ENCODE measurements at regions of chr6 and their contacts with region 1.

Region 1: GRCh38 chr6:157756708-157757429 is 66.2 kb upstream of the SNX9 start:
- DNase-seq: peak; percentile 78 to 87 (median 81)
- H3K4me3 ChIP-seq: no peak overlapping the region
- H3K27ac ChIP-seq: no peak overlapping the region
- H3K4me1 ChIP-seq: peaks cover 2 to 11% (median 10%) of the 10 kb centered on the region in 4 experiments
- H3K27me3 ChIP-seq: peaks cover 0 to 2% (median 0%) of the 10 kb centered on the region in 5 experiments

Region 2: GRCh38 chr6:157726892-157727628 is 29.8 kb before region 1 on chr6:
- CTCF ChIA-PET with region 1: no interaction called
- POLR2A ChIA-PET with region 1: no interaction called
- DNase-seq: no peak
- H3K4me3 ChIP-seq: no peak overlapping the region
- H3K27ac ChIP-seq: no peak overlapping the region
- H3K4me1 ChIP-seq: no peaks in the 10 kb centered on the region
- H3K27me3 ChIP-seq: peaks cover 0 to 2% (median 0%) of the 10 kb centered on the region in 5 experiments

Region 3: DNA sequence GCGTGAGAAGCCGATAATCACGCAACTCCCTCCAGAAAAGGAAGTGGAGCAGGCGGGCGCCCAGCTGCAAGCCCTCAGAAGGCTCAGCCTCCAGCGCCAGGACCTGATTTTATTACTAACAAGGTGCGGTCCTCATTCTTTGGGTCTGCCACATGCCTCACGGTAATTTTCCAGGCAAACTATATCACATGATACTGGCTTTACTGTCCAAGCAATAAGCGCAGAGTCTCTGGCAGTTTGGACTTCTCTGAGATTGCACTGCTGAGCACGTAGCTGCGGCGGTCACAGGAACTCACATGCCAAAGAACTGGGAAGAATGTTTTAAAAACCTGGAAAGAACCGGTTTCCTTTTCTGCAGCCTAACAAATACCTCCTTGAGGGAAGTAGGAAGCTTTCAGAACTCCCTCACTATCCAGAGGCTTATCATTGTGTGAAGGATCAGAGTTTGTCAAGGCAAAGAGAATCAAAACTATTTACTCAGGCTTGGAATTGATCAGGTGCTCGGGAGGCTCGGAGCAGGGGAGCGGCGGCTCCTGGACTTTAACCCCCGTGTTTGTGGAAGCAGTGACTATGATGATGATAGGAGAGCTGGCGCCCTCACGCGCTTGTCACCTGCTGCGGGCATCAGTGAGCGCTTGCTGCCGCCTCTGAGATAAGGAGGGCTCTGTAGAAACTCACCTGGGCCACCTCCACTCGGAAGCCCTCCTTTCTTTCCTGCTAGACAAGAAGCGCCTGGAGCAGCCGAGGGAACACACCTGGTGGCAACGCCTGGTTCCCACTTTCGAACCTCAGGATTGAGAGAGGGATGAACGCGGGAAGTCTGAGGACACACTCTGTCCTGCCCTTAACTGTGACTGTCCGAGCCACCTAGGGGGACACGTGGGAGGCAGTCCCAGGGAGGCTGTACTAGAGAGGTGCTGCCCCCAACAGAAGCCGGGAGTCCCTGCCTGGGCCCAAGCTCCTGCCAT is 197.6 kb after region 1 on chr6:
- CTCF ChIA-PET with region 1: interaction called, 10 read pairs
- POLR2A ChIA-PET with region 1: no interaction called
- DNase-seq: peak in 1 of 3 donors; percentile 30
- H3K4me3 ChIP-seq: no peak overlapping the region
- H3K27ac ChIP-seq: no peak overlapping the region
- H3K4me1 ChIP-seq: peaks cover 0 to 2% (median 0%) of the 10 kb centered on the region in 4 experiments
- H3K27me3 ChIP-seq: no peaks in the 10 kb centered on the region